Activated naive CD4-positive, alpha-beta T cell treated with anti-CD3 and anti-CD28 coated beads for 36 hours (primary cell): ENCODE measurements at regions of chr5 and their contacts with region 1.

Region 1: GRCh38 chr5:157540707-157541446 is 34.7 kb downstream of the ADAM19 start:
- DNase-seq: peak; percentile 63
- H3K4me3 Mint-ChIP-seq: peak overlapping the region; percentile 8
- H3K27ac Mint-ChIP-seq: peak overlapping the region; percentile 66
- H3K4me1 Mint-ChIP-seq: peaks cover 50% of the 10 kb centered on the region
- H3K27me3 Mint-ChIP-seq: no peaks in the 10 kb centered on the region

Region 2: DNA sequence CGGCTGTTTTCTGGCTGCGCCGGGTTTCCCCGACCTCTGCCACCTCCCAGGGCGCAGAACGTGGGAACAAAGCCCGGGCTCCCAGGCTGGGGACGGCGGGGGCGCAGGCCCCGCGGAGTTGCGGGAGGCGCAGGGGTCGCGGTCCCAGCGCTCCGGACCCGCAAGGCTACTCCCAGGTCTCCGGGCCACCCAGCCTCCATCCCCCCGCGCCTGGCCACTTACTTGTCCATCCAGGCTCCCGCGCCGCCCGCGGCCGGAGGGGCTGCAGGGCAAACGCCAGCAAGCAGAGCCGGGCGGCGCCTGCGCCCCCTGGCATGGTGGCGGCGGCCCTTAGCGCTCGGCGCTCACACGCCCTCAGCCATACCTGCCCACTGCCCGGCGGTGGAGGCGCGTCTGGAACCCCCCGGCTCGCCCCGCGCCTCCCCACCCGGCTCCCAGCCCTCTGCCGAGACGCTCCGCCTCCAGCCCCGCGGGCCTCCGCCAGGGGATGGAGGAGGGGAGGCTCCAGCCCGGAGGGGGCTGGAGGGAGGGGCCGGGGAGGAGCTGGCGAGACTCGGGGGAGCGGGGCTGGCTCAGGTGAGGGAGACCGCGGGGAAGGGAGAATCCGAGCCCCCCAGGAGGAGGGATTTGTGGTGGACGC is 34.6 kb after region 1 on chr5 and contains the start of gene ADAM19:
- CTCF ChIA-PET with region 1: no interaction called
- intact Hi-C with region 1: loop called (anchors 1 kb)
- DNase-seq: peak; percentile 31
- H3K4me3 Mint-ChIP-seq: peak within 1 kb of the TSS; percentile 89
- H3K27ac Mint-ChIP-seq: peak within 1 kb of the TSS; percentile 74
- H3K4me1 Mint-ChIP-seq: peaks cover 42% of the 10 kb centered on the region
- H3K27me3 Mint-ChIP-seq: peaks cover 13% of the 10 kb centered on the region
- total RNA-seq, gene ADAM19: 37.3 to 39.3 TPM

Region 3: DNA sequence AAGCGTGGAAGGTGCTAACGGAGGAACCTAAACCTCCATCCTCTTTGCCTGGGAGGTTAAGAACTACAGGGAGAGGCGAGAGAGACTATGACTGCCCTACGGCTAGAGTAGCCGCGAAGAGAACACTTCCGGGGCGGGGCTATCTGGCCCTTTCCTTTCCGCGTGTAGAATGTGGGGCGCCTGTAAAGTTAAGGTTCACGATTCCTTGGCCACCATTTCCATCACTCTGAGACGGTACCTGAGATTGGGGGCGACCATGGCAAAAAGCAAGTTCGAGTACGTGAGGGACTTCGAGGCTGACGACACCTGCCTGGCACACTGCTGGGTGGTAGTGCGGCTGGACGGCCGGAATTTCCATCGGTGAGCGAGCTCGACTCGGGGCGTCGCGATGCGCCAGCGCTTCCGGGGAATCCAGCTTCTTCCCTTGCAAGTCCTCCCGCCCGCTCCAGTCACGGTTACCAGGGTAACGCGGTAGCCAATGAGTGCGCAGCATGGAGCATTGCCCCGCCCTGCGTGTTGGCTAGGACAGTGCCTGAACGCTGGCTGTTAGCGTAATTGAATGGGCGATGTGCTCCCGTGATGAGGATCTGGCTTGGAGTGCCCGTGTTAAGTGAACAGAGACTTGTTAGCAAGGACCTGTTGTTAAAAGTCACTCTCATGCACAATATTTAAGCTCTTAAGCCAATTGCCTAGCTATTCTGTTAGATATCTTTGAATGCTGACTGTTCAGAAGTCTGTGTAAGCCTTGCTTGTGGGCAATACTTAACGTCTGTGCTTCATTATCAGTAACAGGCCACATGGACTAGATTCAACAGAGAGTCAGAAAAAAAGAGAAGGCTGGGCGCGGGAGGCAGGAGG is 190.6 kb after region 1 on chr5 and contains the start of gene THG1L:
- CTCF ChIA-PET with region 1: no interaction called
- intact Hi-C with region 1: loop called (anchors 1 kb)
- DNase-seq: peak; percentile 100
- H3K4me3 Mint-ChIP-seq: peak within 1 kb of the TSS; percentile 97
- H3K27ac Mint-ChIP-seq: peak within 1 kb of the TSS; percentile 95
- H3K4me1 Mint-ChIP-seq: peaks cover 25% of the 10 kb centered on the region
- H3K27me3 Mint-ChIP-seq: no peaks in the 10 kb centered on the region
- total RNA-seq, gene THG1L: 28.1 to 30.2 TPM